ENCODE measurements at regions of chr3 and their contacts with region 1.

Region 1: DNA sequence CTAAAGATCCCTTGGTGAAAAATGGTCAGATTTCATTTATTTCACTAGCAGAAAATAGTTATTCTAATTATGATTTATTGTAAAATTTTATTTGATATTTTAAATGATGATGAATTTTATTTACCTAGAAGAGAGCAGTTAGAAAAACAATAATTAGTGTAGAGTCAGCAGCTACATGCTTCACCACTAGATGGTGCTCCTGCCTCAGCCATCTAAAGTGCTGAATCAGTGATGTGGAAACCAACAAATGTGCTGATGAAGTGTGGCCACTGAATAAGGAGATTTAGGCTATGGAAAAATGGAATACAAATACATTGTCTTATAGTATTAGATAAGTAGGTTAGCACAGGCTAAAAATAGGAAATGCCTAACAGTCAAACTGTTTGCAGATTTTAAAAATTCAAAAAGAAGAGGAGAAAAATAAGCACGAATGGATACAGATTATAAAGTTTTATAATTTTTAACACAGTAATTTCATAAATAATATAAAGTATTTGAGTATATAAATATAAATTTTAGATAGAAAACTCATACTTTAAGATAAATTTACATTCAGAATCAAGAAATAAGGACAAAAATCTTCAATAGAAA is 109.8 kb downstream of the PPP2R3A start:
- DNase-seq: peak; percentile 70 to 93
- H3K4me3 ChIP-seq: no peak overlapping the region
- H3K27ac ChIP-seq: no peak overlapping the region
- H3K4me1 ChIP-seq: peaks cover 0 to 31% (median 11%) of the 10 kb centered on the region in 4 donors
- H3K27me3 ChIP-seq: no peaks in the 10 kb centered on the region
- CTCF ChIP-seq: peak in 5 of 7 experiments; percentile 78 to 94 (median 89)
- EP300 ChIP-seq: no peak
- POLR2A ChIP-seq: no peak

Region 2: DNA sequence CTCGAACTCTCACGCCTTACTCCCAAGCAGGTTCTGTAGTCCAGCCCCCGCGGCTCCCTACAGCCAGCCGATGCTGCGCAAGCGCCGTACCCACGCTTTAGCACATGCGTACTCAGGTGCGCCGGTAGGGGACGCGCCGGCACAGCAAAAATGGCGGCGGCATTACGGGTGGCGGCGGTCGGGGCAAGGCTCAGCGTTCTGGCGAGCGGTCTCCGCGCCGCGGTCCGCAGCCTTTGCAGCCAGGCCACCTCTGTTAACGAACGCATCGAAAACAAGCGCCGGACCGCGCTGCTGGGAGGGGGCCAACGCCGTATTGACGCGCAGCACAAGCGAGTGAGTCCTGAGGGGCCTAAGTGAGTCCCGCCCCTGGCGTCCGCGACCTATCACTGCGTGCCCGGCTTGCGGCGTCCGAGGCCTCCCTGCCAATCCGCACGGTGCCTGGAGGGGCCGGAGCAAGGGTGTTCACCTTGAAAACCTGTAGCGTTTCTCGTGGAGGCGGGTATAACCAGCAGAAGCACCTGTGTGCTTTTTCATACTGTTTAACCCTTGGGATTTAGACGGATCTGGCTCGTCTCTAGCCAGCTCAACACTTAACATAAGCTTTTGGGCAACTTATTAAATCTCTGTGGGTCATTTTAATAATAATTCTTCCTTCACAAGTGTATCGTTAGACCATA is 175.1 kb after region 1 on chr3 and contains the start of gene PCCB:
- intact Hi-C with region 1: loop called (anchors 10 kb)
- DNase-seq: peak; percentile 96 to 98
- H3K4me3 ChIP-seq: peak within 1 kb of the TSS; percentile 58 to 79 (median 60)
- H3K27ac ChIP-seq: peak within 1 kb of the TSS; percentile 92 to 97 (median 93)
- H3K4me1 ChIP-seq: peaks cover 13 to 23% (median 19%) of the 10 kb centered on the region in 4 donors
- H3K27me3 ChIP-seq: no peaks in the 10 kb centered on the region
- CTCF ChIP-seq: peak in 6 of 7 experiments; percentile 57 to 98 (median 80)
- EP300 ChIP-seq: no peak
- POLR2A ChIP-seq: peak in 1 of 4 donors; percentile 44
- total RNA-seq, gene PCCB: 4.7 to 45.0 (median 23.2) TPM

Region 3: GRCh38 chr3:137013955-137014688 is 938.8 kb after region 1 on chr3:
- intact Hi-C with region 1: loop called (anchors 10 kb)
- DNase-seq: peak; percentile 94 to 96
- H3K4me3 ChIP-seq: peak overlapping the region; percentile 45 to 54 (median 48)
- H3K27ac ChIP-seq: peak overlapping the region; percentile 52 to 82 (median 67)
- H3K4me1 ChIP-seq: peaks cover 0 to 10% (median 3%) of the 10 kb centered on the region in 4 donors
- H3K27me3 ChIP-seq: no peaks in the 10 kb centered on the region
- CTCF ChIP-seq: peak in 6 of 7 experiments; percentile 21 to 95 (median 89)
- EP300 ChIP-seq: no peak
- POLR2A ChIP-seq: no peak

Measured in stomach (tissue), 19 donors.